ENCODE measurements at regions of chrX and their contacts with region 1.

Region 1: GRCh38 chrX:20266810-20267606 is at the start of gene RPS6KA3:
- DNase-seq: peak; percentile 78 to 93 (median 87)
- ATAC-seq: peak; percentile 83 to 90 (median 87)
- H3K4me3 ChIP-seq: peak within 1 kb of the TSS; percentile 84
- H3K4me3 Mint-ChIP-seq: peak within 1 kb of the TSS; percentile 90 to 97 (median 93)
- H3K27ac ChIP-seq: peak within 1 kb of the TSS; percentile 85
- H3K27ac Mint-ChIP-seq: peak within 1 kb of the TSS; percentile 89 to 97
- H3K4me1 ChIP-seq: peaks cover 10 to 14% of the 10 kb centered on the region in 2 experiments
- H3K4me1 Mint-ChIP-seq: peaks cover 17 to 20% (median 18%) of the 10 kb centered on the region in 3 donors
- H3K27me3 ChIP-seq: no peaks in the 10 kb centered on the region
- H3K27me3 Mint-ChIP-seq: no peaks in the 10 kb centered on the region
- total RNA-seq, gene RPS6KA3: 65.2 to 89.9 (median 71.9) TPM

Region 2: GRCh38 chrX:20211261-20211786 is 55.7 kb before region 1 on chrX:
- CTCF ChIA-PET with region 1: no interaction called
- POLR2A ChIA-PET with region 1: interaction called in 1 of 2 experiments, 10 read pairs
- DNase-seq: no peak
- ATAC-seq: peak in 1 of 4 experiments; percentile 59
- H3K4me3 ChIP-seq: no peak overlapping the region
- H3K4me3 Mint-ChIP-seq: no peak overlapping the region
- H3K27ac ChIP-seq: no peak overlapping the region
- H3K27ac Mint-ChIP-seq: peak overlapping the region in 1 of 2 donors; percentile 5
- H3K4me1 ChIP-seq: peaks cover 0 to 8% of the 10 kb centered on the region in 2 experiments
- H3K4me1 Mint-ChIP-seq: peaks cover 63 to 75% (median 72%) of the 10 kb centered on the region in 3 donors
- H3K27me3 ChIP-seq: no peaks in the 10 kb centered on the region
- H3K27me3 Mint-ChIP-seq: peaks cover 0 to 9% of the 10 kb centered on the region in 2 donors

Region 3: DNA sequence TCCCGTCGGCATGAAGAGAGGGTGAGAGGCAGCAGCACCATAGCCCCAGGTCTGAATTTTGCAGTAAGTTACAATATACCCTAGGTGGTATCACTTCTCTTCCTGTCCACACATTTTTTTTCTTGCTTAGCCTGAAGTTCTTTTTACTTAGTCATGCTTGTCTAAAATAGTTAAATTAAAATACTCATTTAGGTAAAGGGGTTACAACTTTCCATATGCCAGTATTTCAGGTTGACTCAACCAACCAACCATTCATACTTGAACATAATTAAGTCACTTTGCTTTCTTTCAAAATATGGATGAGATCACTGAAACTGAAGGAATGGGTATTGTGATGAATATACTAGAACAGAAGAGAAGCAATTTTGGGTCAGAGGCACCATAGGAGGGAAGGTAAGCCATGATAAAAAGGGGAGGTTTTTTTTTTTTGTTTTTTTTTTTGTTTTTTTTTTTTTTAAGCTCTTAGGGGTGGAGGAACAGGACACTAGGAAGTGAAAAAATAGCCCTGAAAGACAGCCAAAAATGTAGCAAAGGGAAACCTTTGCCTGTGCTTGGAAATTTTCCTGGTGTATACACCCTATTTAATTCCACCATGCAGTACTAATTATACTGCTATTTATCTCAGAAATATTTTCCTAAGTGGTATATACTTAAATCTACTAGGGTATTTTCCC is 42.1 kb before region 1 on chrX:
- CTCF ChIA-PET with region 1: no interaction called
- POLR2A ChIA-PET with region 1: no interaction called
- DNase-seq: no peak
- ATAC-seq: no peak
- H3K4me3 ChIP-seq: no peak overlapping the region
- H3K4me3 Mint-ChIP-seq: peak overlapping the region in 1 of 3 donors; percentile 0
- H3K27ac ChIP-seq: no peak overlapping the region
- H3K27ac Mint-ChIP-seq: peak overlapping the region; percentile 0 to 81
- H3K4me1 ChIP-seq: no peaks in the 10 kb centered on the region
- H3K4me1 Mint-ChIP-seq: peaks cover 12 to 70% (median 49%) of the 10 kb centered on the region in 3 donors
- H3K27me3 ChIP-seq: no peaks in the 10 kb centered on the region
- H3K27me3 Mint-ChIP-seq: peaks cover 0 to 8% of the 10 kb centered on the region in 2 donors

Region 4: GRCh38 chrX:20378291-20378920 is 111.4 kb after region 1 on chrX:
- CTCF ChIA-PET with region 1: no interaction called
- POLR2A ChIA-PET with region 1: no interaction called
- DNase-seq: no peak
- ATAC-seq: peak in 3 of 4 experiments; percentile 23 to 41 (median 35)
- H3K4me3 ChIP-seq: no peak overlapping the region
- H3K4me3 Mint-ChIP-seq: no peak overlapping the region
- H3K27ac ChIP-seq: no peak overlapping the region
- H3K27ac Mint-ChIP-seq: peak overlapping the region; percentile 59 to 76
- H3K4me1 ChIP-seq: peaks cover 5 to 7% of the 10 kb centered on the region in 2 experiments
- H3K4me1 Mint-ChIP-seq: peaks cover 24 to 38% (median 26%) of the 10 kb centered on the region in 3 donors
- H3K27me3 ChIP-seq: no peaks in the 10 kb centered on the region
- H3K27me3 Mint-ChIP-seq: peaks cover 0 to 17% of the 10 kb centered on the region in 2 donors